PC-9 (cell line): ENCODE measurements at regions of chr12 and their contacts with region 1.

Region 1: DNA sequence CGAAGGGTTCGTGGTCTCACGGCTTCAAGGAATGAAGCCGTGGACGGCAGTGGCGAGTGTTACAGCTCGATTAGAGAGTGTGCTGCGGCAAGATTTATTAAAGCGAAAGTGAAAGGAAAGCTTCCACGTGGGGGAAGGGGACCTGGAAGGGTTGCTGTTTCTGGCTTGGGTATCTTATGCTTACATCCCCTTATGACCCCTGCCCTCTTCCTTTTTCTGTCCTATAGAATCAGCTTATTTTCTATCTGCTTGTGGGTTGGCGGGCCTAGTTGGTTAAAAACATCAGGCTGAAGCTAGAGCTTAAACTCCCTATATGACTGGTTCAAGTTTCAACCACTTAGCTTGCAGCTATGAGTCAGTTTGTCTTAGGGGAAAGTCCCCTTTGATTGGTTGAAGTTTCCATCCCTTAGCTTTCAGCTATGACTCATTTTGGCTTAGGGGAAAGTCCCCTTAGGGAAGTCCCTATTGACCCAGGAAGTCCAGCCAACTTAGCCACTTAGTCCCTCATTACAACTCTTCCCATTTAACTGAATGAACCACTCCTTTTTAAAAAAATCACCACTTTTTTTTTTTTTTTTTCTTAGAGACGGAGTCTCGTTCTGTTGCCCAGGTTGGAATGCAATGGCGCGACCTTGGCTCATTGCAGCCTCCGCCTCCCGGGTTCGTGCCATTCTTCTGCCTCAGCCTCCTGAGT is 1494.7 kb upstream of the TMEM132C start:
- DNase-seq: peak; percentile 59 to 98
- H3K4me3 ChIP-seq: peak overlapping the region; percentile 74
- H3K27ac ChIP-seq: peak overlapping the region; percentile 82
- H3K4me1 ChIP-seq: 0 out of 2 replicates have a peak, but pooled peaks cover 8% of the 10 kb centered on the region
- H3K27me3 ChIP-seq: no peaks in the 10 kb centered on the region
- CTCF ChIP-seq: no peak

Region 2: DNA sequence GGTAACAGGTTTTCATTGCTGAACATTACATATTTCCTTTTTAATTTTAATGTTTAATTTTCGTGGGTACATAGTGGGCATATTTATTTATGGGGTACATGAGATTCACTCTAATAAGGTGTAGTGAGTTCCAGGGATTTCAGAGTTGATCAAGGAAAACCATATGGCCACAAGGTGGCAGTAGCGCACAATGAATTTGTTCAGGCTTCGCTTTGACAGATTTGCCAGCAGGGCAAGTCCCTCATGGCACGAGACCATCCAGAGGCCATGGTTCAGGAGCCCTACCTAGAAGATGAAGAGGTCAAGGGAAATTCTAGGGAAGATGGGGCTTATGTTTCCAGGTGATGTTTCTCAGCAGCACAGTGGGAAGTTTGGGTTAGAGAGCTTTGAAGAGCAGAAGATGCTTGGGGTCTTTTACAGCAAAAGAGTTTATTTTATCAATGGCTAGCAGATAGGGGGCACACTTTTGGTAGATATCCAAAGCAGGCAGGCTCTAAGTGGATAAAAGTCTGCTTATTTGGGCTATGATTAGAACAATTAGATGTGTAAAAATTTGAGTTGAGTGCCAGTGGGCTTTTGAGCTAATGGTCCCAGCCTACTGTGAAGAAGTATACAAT is 702.7 kb before region 1 on chr12:
- CTCF ChIA-PET with region 1: no interaction called
- POLR2A ChIA-PET with region 1: no interaction called
- intact Hi-C with region 1: loop called (anchors 5 kb)
- DNase-seq: peak in 1 of 2 experiments; percentile 60
- H3K4me3 ChIP-seq: no peak overlapping the region
- H3K27ac ChIP-seq: no peak overlapping the region
- H3K4me1 ChIP-seq: no peaks in the 10 kb centered on the region
- H3K27me3 ChIP-seq: no peaks in the 10 kb centered on the region
- CTCF ChIP-seq: peak; percentile 83

Region 3: GRCh38 chr12:126404293-126404881 is 367.9 kb before region 1 on chr12:
- CTCF ChIA-PET with region 1: no interaction called
- POLR2A ChIA-PET with region 1: no interaction called
- intact Hi-C with region 1: loop called (anchors 10 kb)
- DNase-seq: peak; percentile 16 to 80
- H3K4me3 ChIP-seq: no peak overlapping the region
- H3K27ac ChIP-seq: peak overlapping the region; percentile 95
- H3K4me1 ChIP-seq: peaks cover 28% of the 10 kb centered on the region
- H3K27me3 ChIP-seq: no peaks in the 10 kb centered on the region
- CTCF ChIP-seq: no peak

Region 4: DNA sequence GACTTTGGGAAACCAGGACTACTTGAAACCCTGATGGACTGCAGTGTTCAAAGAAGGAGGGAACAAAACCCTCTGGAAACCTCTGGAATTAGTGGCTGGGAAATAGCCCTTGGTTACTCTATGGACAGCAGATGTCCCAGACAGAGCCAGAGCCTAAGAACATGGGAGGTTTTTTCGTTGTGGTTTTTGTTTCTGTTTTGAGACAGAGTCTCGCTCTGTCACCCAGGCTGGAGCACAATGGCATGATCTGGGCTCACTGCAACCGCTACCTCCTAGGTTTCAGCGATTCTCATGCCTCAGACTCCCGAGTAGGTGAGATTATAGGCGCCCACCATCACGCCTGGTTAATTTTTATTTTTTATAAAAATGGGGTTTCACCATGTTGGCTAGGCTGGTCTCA is 328.3 kb before region 1 on chr12:
- CTCF ChIA-PET with region 1: no interaction called
- POLR2A ChIA-PET with region 1: no interaction called
- intact Hi-C with region 1: no loop called
- DNase-seq: no peak
- H3K4me3 ChIP-seq: no peak overlapping the region
- H3K27ac ChIP-seq: no peak overlapping the region
- H3K4me1 ChIP-seq: no peaks in the 10 kb centered on the region
- H3K27me3 ChIP-seq: no peaks in the 10 kb centered on the region
- CTCF ChIP-seq: no peak

Region 5: DNA sequence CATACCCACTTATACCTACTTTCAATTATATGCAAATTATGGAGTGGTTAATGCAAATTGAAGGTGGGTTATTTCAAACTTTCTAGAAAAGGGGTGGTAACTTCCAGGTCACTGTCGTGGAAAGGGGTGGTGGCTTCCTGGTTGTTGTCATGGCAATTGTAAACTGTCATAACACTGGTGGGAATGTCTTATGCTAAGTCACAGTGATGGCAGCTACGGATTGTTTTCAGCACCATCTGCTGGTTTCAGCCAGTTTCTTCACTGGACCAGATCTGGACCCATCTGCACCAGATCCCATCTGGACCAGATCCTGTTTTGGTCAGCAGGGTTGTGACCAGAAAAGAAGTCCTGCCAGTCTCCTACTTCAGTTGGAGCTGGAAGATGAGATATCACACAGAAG is 237.8 kb before region 1 on chr12:
- CTCF ChIA-PET with region 1: no interaction called
- POLR2A ChIA-PET with region 1: no interaction called
- intact Hi-C with region 1: no loop called
- DNase-seq: no peak
- H3K4me3 ChIP-seq: no peak overlapping the region
- H3K27ac ChIP-seq: no peak overlapping the region
- H3K4me1 ChIP-seq: no peaks in the 10 kb centered on the region
- H3K27me3 ChIP-seq: no peaks in the 10 kb centered on the region
- CTCF ChIP-seq: no peak

Region 6: GRCh38 chr12:126668538-126668937 is 103.8 kb before region 1 on chr12:
- CTCF ChIA-PET with region 1: no interaction called
- POLR2A ChIA-PET with region 1: no interaction called
- intact Hi-C with region 1: loop called (anchors 2 kb)
- DNase-seq: peak in 1 of 2 experiments; percentile 74
- H3K4me3 ChIP-seq: no peak overlapping the region
- H3K27ac ChIP-seq: peak overlapping the region; percentile 84
- H3K4me1 ChIP-seq: peaks cover 23% of the 10 kb centered on the region
- H3K27me3 ChIP-seq: no peaks in the 10 kb centered on the region
- CTCF ChIP-seq: no peak